ENCODE measurements at regions of chr1 and their contacts with region 1.

Region 1: GRCh38 chr1:210233216-210234020 is 822 bp downstream of the SERTAD4 start:
- DNase-seq: peak; percentile 75 to 77
- H3K4me3 ChIP-seq: peak overlapping the region; percentile 96
- H3K27ac ChIP-seq: peak overlapping the region; percentile 41
- H3K4me1 ChIP-seq: peaks cover 31% of the 10 kb centered on the region
- H3K27me3 ChIP-seq: no peaks in the 10 kb centered on the region
- CTCF ChIP-seq: no peak

Region 2: GRCh38 chr1:209497729-209498128 is 735.7 kb before region 1 on chr1:
- CTCF ChIA-PET with region 1: no interaction called
- POLR2A ChIA-PET with region 1: no interaction called
- intact Hi-C with region 1: no loop called
- DNase-seq: no peak
- H3K4me3 ChIP-seq: no peak overlapping the region
- H3K27ac ChIP-seq: no peak overlapping the region
- H3K4me1 ChIP-seq: no peaks in the 10 kb centered on the region
- H3K27me3 ChIP-seq: no peaks in the 10 kb centered on the region
- CTCF ChIP-seq: no peak

Region 3: DNA sequence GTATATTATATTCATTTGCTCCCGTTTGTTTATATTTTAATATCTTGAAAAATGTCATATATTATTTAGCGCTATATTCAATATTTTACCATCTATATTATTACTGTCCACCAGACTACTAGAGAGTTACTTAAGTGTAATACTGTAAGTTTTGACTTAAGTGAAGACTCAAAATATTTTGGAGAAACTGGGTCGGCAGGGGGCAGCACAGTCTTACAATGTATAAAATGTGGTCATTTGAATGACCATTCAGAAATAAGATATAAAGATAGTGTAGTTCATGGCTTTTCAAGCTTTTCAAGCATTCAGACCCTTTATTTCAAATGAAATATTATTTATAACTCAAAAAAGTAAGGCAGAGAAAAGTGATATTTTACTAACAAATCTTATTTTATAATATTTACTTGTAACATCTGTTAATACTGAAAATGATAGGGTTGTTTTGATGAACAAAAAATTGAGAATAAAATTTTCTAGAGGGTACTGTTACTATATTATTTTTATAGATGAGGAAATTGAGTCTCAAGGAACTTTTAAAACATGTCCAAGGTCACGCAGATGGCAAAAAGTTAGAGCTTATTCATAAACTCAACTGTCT is 89.9 kb before region 1 on chr1:
- CTCF ChIA-PET with region 1: no interaction called
- POLR2A ChIA-PET with region 1: no interaction called
- intact Hi-C with region 1: loop called (anchors 1 kb)
- DNase-seq: peak; percentile 41 to 74
- H3K4me3 ChIP-seq: no peak overlapping the region
- H3K27ac ChIP-seq: no peak overlapping the region
- H3K4me1 ChIP-seq: no peaks in the 10 kb centered on the region; the same call in 1 of the 2 replicates
- H3K27me3 ChIP-seq: no peaks in the 10 kb centered on the region
- CTCF ChIP-seq: peak; percentile 91

Region 4: GRCh38 chr1:210185063-210185462 is 48.4 kb before region 1 on chr1:
- CTCF ChIA-PET with region 1: no interaction called
- POLR2A ChIA-PET with region 1: no interaction called
- intact Hi-C with region 1: loop called (anchors 2 kb)
- DNase-seq: no peak
- H3K4me3 ChIP-seq: no peak overlapping the region
- H3K27ac ChIP-seq: no peak overlapping the region
- H3K4me1 ChIP-seq: peaks cover 19% of the 10 kb centered on the region
- H3K27me3 ChIP-seq: no peaks in the 10 kb centered on the region
- CTCF ChIP-seq: no peak

Measured in PC-9 (cell line).